PC-9 (cell line): ENCODE measurements at regions of chr4 and their contacts with region 1.

Region 1: GRCh38 chr4:112523764-112524505 is 8.0 kb upstream of the NEUROG2 start:
- DNase-seq: peak; percentile 70 to 87
- H3K4me3 ChIP-seq: peak overlapping the region; percentile 60
- H3K27ac ChIP-seq: no peak overlapping the region
- H3K4me1 ChIP-seq: 0 out of 2 replicates have a peak, but pooled peaks cover 4% of the 10 kb centered on the region
- H3K27me3 ChIP-seq: no peaks in the 10 kb centered on the region; the same call in 1 of the 2 replicates
- CTCF ChIP-seq: peak; percentile 97

Region 2: DNA sequence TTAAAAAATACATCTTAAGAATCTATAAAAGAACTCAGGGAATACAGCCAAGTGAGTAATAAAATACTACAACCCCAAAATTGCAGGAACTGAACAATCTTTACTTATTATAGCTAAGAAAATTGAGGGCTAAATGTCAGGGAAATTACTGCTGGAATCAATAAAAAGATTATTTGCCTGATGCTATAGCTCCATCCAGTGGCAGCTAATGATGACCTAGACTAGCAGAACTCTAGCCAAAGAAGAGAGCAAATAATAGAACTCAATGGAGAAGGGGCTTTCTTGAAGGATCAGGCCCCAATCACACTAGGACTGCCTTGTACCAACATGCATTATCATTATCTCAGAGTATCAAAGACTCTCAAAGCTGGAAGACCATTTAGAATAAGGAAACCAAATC is 463.7 kb before region 1 on chr4:
- CTCF ChIA-PET with region 1: no interaction called
- POLR2A ChIA-PET with region 1: no interaction called
- intact Hi-C with region 1: loop called (anchors 1 kb)
- DNase-seq: peak in 1 of 2 experiments; percentile 5
- H3K4me3 ChIP-seq: no peak overlapping the region
- H3K27ac ChIP-seq: no peak overlapping the region
- H3K4me1 ChIP-seq: no peaks in the 10 kb centered on the region
- H3K27me3 ChIP-seq: no peaks in the 10 kb centered on the region
- CTCF ChIP-seq: peak; percentile 79

Region 3: GRCh38 chr4:112109186-112110058 is 414.5 kb before region 1 on chr4:
- CTCF ChIA-PET with region 1: no interaction called
- POLR2A ChIA-PET with region 1: no interaction called
- intact Hi-C with region 1: loop called (anchors 2 kb)
- DNase-seq: peak in 1 of 2 experiments; percentile 71
- H3K4me3 ChIP-seq: no peak overlapping the region
- H3K27ac ChIP-seq: peak overlapping the region; percentile 25; the same call in 1 of the 2 replicates
- H3K4me1 ChIP-seq: peaks cover 47% of the 10 kb centered on the region
- H3K27me3 ChIP-seq: no peaks in the 10 kb centered on the region
- CTCF ChIP-seq: no peak

Region 4: DNA sequence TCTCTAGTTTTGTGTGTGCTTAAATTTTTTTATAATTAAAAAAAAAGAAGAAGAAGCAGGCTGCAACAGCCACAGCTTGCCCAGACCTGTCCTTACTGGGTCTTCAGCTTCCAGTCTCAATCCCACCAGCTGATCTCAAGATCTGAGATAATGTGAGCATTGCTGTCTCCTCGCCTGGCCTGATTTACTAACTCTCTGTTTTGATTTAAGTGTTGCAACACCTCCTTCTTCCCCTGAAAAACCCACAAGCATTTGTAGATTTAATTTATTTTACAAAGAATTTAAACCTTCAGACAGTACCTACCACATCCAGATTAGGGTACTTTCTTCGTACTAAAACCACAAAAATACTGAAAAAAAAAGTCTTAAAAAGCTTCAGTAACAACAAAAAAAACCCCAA is 340.7 kb before region 1 on chr4:
- CTCF ChIA-PET with region 1: no interaction called
- POLR2A ChIA-PET with region 1: no interaction called
- intact Hi-C with region 1: no loop called
- DNase-seq: no peak
- H3K4me3 ChIP-seq: no peak overlapping the region
- H3K27ac ChIP-seq: no peak overlapping the region
- H3K4me1 ChIP-seq: no peaks in the 10 kb centered on the region
- H3K27me3 ChIP-seq: no peaks in the 10 kb centered on the region
- CTCF ChIP-seq: no peak

Region 5: GRCh38 chr4:112253382-112254000 is 270.4 kb before region 1 on chr4:
- CTCF ChIA-PET with region 1: interaction called, 22 read pairs
- POLR2A ChIA-PET with region 1: no interaction called
- intact Hi-C with region 1: no loop called
- DNase-seq: no peak
- H3K4me3 ChIP-seq: no peak overlapping the region
- H3K27ac ChIP-seq: no peak overlapping the region
- H3K4me1 ChIP-seq: no peaks in the 10 kb centered on the region
- H3K27me3 ChIP-seq: no peaks in the 10 kb centered on the region
- CTCF ChIP-seq: no peak

Region 6: DNA sequence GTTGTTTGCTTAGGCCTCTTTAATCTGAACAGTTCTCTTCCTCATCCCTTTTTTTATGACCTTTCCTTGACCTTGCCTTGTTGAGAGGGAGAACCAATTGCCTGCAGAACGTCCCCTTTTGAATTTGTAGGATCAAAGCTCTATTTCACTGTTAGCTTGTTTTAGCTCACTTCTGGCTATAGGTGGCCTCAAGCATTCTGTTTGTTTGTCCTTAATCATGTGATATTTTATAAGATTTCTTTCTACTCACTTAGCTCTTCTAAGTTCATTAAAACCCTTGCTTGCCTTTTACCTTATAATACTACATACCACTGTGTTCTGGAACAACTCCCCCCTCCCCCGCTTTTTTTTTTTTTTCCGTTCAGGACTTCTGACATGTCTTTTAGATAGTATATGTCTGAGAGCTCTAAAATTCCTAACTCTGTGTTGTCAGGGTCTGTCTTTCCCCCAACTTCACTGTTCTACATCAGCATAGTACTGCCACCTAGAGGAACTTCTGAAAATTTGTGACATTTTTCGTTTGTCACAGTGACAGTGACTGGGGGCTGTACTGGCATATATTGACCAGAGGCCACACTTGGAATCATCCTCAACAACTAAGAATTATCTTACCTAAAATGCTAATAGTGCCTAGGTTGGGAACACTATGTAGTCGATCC is 241.5 kb after region 1 on chr4:
- CTCF ChIA-PET with region 1: no interaction called
- POLR2A ChIA-PET with region 1: no interaction called
- intact Hi-C with region 1: loop called (anchors 10 kb)
- DNase-seq: no peak
- H3K4me3 ChIP-seq: no peak overlapping the region
- H3K27ac ChIP-seq: no peak overlapping the region
- H3K4me1 ChIP-seq: no peaks in the 10 kb centered on the region
- H3K27me3 ChIP-seq: no peaks in the 10 kb centered on the region
- CTCF ChIP-seq: peak; percentile 62; the same call in 1 of the 2 replicates